ENCODE measurements at regions of chr11 and their contacts with region 1.

Region 1: GRCh38 chr11:3841426-3842350 is 929 bp upstream of the RHOG start:
- DNase-seq: peak; percentile 94
- ATAC-seq: peak; percentile 71
- H3K4me3 Mint-ChIP-seq: peak overlapping the region; percentile 81
- H3K27ac Mint-ChIP-seq: peak overlapping the region; percentile 99
- H3K4me1 Mint-ChIP-seq: peaks cover 51% of the 10 kb centered on the region
- H3K27me3 Mint-ChIP-seq: no peaks in the 10 kb centered on the region

Region 2: DNA sequence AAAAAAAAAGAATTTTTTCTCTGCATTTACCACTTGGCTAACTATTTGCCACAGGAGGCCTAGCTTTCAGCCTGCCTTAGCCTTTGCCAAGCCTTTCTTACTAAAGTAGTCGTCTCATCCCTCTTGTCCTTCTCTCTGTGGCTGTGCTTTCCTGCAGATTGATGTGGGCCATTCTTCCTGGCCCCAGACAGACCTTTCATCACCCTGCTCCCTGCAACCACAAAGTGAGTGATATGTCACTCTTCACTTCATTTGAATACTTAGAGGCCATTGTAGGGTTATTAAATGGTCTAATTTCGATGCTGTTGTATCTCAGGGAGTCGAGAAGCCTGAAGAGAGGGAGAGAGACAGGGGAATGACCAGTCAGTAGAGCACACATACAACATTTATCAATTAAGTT is 237.5 kb before region 1 on chr11:
- CTCF ChIA-PET with region 1: no interaction called
- POLR2A ChIA-PET with region 1: no interaction called
- DNase-seq: no peak
- ATAC-seq: no peak
- H3K4me3 Mint-ChIP-seq: no peak overlapping the region
- H3K27ac Mint-ChIP-seq: no peak overlapping the region
- H3K4me1 Mint-ChIP-seq: no peaks in the 10 kb centered on the region
- H3K27me3 Mint-ChIP-seq: peaks cover 2% of the 10 kb centered on the region

Region 3: GRCh38 chr11:3738241-3738640 is 103.4 kb before region 1 on chr11:
- CTCF ChIA-PET with region 1: no interaction called
- POLR2A ChIA-PET with region 1: no interaction called
- DNase-seq: no peak
- ATAC-seq: no peak
- H3K4me3 Mint-ChIP-seq: no peak overlapping the region
- H3K27ac Mint-ChIP-seq: no peak overlapping the region
- H3K4me1 Mint-ChIP-seq: no peaks in the 10 kb centered on the region
- H3K27me3 Mint-ChIP-seq: no peaks in the 10 kb centered on the region

Region 4: GRCh38 chr11:3775736-3776406 is 65.8 kb before region 1 on chr11:
- CTCF ChIA-PET with region 1: no interaction called
- POLR2A ChIA-PET with region 1: no interaction called
- DNase-seq: no peak
- ATAC-seq: no peak
- H3K4me3 Mint-ChIP-seq: no peak overlapping the region
- H3K27ac Mint-ChIP-seq: no peak overlapping the region
- H3K4me1 Mint-ChIP-seq: no peaks in the 10 kb centered on the region
- H3K27me3 Mint-ChIP-seq: no peaks in the 10 kb centered on the region

Region 5: DNA sequence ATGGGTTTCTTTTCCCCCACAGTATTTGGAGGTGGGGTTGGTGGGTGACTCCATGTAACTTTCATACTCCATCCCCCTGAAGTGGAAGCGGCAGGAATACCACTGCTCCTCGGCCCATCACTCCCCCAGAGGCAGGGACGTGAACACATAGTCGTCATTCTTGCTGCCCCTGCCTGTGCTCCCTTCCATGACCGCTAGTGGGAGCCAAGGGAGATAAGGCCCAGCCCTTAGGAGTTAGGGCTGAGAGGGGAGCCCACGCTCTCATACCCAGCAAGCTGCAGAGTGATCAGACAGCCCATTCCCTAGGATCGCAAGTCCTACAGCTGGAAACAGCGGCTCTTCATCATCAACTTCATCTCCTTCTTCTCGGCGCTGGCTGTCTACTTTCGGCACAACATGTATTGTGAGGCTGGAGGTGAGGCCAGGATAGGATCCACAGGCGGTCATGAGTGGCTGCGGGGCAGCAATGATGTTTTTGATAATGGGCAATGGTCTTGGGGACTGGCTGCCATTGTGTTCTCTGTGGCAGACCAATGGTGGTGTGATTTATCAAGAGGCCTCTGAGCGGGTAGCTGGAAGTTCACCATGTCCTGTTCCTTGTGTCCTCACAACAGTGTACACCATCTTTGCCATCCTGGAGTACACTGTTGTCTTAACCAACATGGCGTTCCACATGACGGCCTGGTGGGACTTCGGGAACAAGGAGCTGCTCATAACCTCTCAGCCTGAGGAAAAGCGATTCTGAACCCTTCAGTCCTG is 16.8 kb before region 1 on chr11:
- CTCF ChIA-PET with region 1: interaction called, 25 read pairs
- POLR2A ChIA-PET with region 1: interaction called, 22 read pairs
- DNase-seq: peak; percentile 87
- ATAC-seq: peak; percentile 93
- H3K4me3 Mint-ChIP-seq: no peak overlapping the region
- H3K27ac Mint-ChIP-seq: peak overlapping the region; percentile 46
- H3K4me1 Mint-ChIP-seq: peaks cover 38% of the 10 kb centered on the region
- H3K27me3 Mint-ChIP-seq: no peaks in the 10 kb centered on the region

Region 6: GRCh38 chr11:4032122-4032521 is 190.4 kb after region 1 on chr11:
- CTCF ChIA-PET with region 1: no interaction called
- POLR2A ChIA-PET with region 1: no interaction called
- DNase-seq: no peak
- ATAC-seq: no peak
- H3K4me3 Mint-ChIP-seq: no peak overlapping the region
- H3K27ac Mint-ChIP-seq: no peak overlapping the region
- H3K4me1 Mint-ChIP-seq: peaks cover 10% of the 10 kb centered on the region
- H3K27me3 Mint-ChIP-seq: no peaks in the 10 kb centered on the region

Region 7: GRCh38 chr11:4065601-4066377 is 224.1 kb after region 1 on chr11:
- CTCF ChIA-PET with region 1: interaction called, 630 read pairs
- POLR2A ChIA-PET with region 1: interaction called, 9 read pairs
- DNase-seq: no peak
- ATAC-seq: no peak
- H3K4me3 Mint-ChIP-seq: no peak overlapping the region
- H3K27ac Mint-ChIP-seq: no peak overlapping the region
- H3K4me1 Mint-ChIP-seq: peaks cover 55% of the 10 kb centered on the region
- H3K27me3 Mint-ChIP-seq: no peaks in the 10 kb centered on the region

Measured in activated CD8-positive, alpha-beta T cell treated with anti-CD3 and anti-CD28 coated beads, Interleukin-2, amount 10 ng/mL, durations not matched to agents 7 days and 5 days (primary cell).